ENCODE measurements at regions of chr10 and their contacts with region 1.

Region 1: GRCh38 chr10:122703439-122704118 is 3.9 kb upstream of the C10orf120 start:
- DNase-seq: peak in 8 of 9 experiments; percentile 26 to 67 (median 48)
- ATAC-seq: peak; percentile 46
- H3K4me3 ChIP-seq: no peak overlapping the region
- H3K4me3 Mint-ChIP-seq: no peak overlapping the region
- H3K27ac ChIP-seq: no peak overlapping the region
- H3K27ac Mint-ChIP-seq: no peak overlapping the region
- H3K4me1 ChIP-seq: no peaks in the 10 kb centered on the region
- H3K4me1 Mint-ChIP-seq: peaks cover 3% of the 10 kb centered on the region
- H3K27me3 ChIP-seq: peaks cover 0 to 2% of the 10 kb centered on the region in 2 experiments
- H3K27me3 Mint-ChIP-seq: peaks cover 5% of the 10 kb centered on the region
- CTCF ChIP-seq: peak; percentile 67

Region 2: DNA sequence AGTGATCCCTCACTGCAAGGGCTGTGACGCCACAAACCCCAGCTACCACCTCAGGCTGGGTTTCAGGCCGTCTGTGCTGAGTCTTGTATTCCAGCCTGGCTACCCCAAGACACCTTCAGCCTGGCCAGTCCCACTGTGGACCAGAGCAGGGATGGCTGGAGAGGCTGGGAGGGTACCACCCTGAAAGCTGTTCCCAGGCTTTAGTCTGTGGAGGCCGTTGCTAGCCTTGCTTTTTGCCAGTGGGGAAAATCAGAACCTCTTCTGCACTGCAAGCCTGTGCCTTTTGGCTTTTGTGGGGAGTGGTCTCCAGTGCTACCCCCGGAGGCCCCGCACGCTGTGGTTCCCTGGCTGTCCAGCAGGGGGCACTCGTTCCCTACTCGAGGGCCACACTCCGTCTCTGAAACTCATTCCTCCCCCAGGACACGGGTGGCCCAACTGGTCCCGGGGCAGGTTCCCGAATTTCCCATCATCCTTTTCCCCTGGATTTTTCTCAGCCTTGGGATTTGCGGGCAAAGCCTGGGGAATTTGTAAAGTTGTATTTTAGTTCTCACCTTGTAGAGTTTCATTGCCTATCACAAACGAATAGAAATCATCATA is 560.8 kb before region 1 on chr10:
- CTCF ChIA-PET with region 1: no interaction called
- POLR2A ChIA-PET with region 1: no interaction called
- intact Hi-C with region 1: loop called in 1 of 2 experiments (anchors 10 kb)
- DNase-seq: peak in 5 of 9 experiments; percentile 6 to 24 (median 15)
- ATAC-seq: no peak
- H3K4me3 ChIP-seq: no peak overlapping the region
- H3K4me3 Mint-ChIP-seq: no peak overlapping the region
- H3K27ac ChIP-seq: no peak overlapping the region
- H3K27ac Mint-ChIP-seq: no peak overlapping the region
- H3K4me1 ChIP-seq: no peaks in the 10 kb centered on the region
- H3K4me1 Mint-ChIP-seq: no peaks in the 10 kb centered on the region
- H3K27me3 ChIP-seq: no peaks in the 10 kb centered on the region
- H3K27me3 Mint-ChIP-seq: peaks cover 3% of the 10 kb centered on the region
- CTCF ChIP-seq: peak; percentile 58

Region 3: DNA sequence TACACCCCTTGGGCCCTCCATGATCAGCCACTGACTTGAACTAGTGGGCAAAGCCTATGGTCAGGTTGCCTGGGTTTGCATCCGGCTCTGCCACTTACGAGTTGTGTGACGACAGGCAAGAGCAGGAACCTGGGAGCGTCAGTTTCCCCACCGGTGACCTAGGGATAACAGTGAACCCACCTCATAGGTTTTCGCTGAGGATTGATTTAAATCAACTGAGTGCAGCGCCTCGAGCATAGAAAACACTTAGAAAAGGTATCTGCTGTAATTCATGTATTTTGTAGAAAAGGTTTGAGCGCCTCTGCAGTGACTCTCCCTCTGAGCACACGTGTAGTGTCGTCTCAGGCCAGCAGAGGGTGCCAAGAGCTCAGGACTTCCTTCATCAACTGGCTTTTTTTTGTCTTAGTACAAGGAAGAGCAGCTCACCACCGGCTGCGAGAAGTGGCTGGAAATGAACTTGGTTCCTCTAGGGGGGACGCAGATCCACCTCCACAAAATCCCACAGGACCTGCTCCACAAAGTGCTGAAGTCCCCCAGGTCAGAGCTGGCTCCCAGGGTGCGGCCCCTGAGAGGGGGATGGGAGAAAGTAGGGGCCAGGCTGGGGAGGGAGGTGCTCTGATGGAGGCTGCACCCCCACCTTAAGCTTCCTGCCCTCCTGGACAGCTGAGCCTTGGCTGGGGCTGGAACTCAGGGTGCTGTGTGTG is 404.8 kb before region 1 on chr10:
- CTCF ChIA-PET with region 1: interaction called, 6 read pairs
- POLR2A ChIA-PET with region 1: no interaction called
- intact Hi-C with region 1: loop called in 1 of 2 experiments (anchors 1 kb)
- DNase-seq: peak; percentile 44 to 79 (median 67)
- ATAC-seq: peak; percentile 86
- H3K4me3 ChIP-seq: no peak overlapping the region
- H3K4me3 Mint-ChIP-seq: no peak overlapping the region
- H3K27ac ChIP-seq: no peak overlapping the region
- H3K27ac Mint-ChIP-seq: no peak overlapping the region
- H3K4me1 ChIP-seq: peaks cover 10% of the 10 kb centered on the region
- H3K4me1 Mint-ChIP-seq: peaks cover 10% of the 10 kb centered on the region
- H3K27me3 ChIP-seq: no peaks in the 10 kb centered on the region
- H3K27me3 Mint-ChIP-seq: peaks cover 2% of the 10 kb centered on the region
- CTCF ChIP-seq: peak; percentile 85

Region 4: GRCh38 chr10:122388287-122388997 is 315.1 kb before region 1 on chr10:
- CTCF ChIA-PET with region 1: no interaction called
- POLR2A ChIA-PET with region 1: no interaction called
- intact Hi-C with region 1: no loop called
- DNase-seq: no peak
- ATAC-seq: no peak
- H3K4me3 ChIP-seq: no peak overlapping the region
- H3K4me3 Mint-ChIP-seq: no peak overlapping the region
- H3K27ac ChIP-seq: no peak overlapping the region
- H3K27ac Mint-ChIP-seq: peak overlapping the region; percentile 7
- H3K4me1 ChIP-seq: peaks cover 17% of the 10 kb centered on the region
- H3K4me1 Mint-ChIP-seq: peaks cover 65% of the 10 kb centered on the region
- H3K27me3 ChIP-seq: no peaks in the 10 kb centered on the region
- H3K27me3 Mint-ChIP-seq: no peaks in the 10 kb centered on the region
- CTCF ChIP-seq: no peak

Region 5: DNA sequence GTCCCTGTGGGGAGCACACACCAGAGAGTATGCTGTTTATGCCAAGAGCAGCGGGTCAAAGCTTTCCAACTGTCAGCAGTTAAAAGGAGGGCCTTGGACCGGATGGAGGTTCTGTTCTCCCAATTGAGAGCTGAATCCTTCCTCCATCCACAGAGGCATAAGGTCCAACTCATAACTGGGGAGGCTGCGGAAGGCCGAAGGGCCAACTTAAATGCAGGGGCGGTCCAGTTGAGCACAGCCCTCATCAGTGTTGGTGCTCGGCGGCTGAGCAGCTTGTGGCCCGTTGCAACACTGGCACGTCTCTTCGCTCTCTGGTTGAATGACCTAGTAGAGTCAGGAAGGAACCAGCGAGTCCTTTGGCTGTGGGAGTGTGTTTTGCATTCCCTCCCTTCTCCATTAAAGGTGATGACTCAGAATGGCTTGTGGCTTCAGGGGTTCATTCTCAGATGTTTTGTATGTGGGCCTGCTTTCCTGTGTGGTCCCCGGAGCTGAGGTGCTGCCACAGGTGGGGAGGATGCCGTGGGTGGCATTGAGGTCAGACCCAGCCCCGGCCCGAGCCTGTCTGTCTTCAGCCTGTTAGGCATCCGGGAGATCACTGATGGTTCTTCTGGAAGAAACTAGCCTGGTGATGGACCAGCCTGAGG is 187.9 kb before region 1 on chr10:
- CTCF ChIA-PET with region 1: no interaction called
- POLR2A ChIA-PET with region 1: no interaction called
- intact Hi-C with region 1: loop called in 1 of 2 experiments (anchors 10 kb)
- DNase-seq: peak; percentile 34 to 84 (median 74)
- ATAC-seq: peak; percentile 91
- H3K4me3 ChIP-seq: no peak overlapping the region
- H3K4me3 Mint-ChIP-seq: peak overlapping the region; percentile 19
- H3K27ac ChIP-seq: no peak overlapping the region
- H3K27ac Mint-ChIP-seq: peak overlapping the region; percentile 14
- H3K4me1 ChIP-seq: peaks cover 28% of the 10 kb centered on the region
- H3K4me1 Mint-ChIP-seq: peaks cover 36% of the 10 kb centered on the region
- H3K27me3 ChIP-seq: no peaks in the 10 kb centered on the region
- H3K27me3 Mint-ChIP-seq: peaks cover 1% of the 10 kb centered on the region
- CTCF ChIP-seq: no peak